Natural killer cell (primary cell): ENCODE measurements at regions of chr4 and their contacts with region 1.

Region 1: DNA sequence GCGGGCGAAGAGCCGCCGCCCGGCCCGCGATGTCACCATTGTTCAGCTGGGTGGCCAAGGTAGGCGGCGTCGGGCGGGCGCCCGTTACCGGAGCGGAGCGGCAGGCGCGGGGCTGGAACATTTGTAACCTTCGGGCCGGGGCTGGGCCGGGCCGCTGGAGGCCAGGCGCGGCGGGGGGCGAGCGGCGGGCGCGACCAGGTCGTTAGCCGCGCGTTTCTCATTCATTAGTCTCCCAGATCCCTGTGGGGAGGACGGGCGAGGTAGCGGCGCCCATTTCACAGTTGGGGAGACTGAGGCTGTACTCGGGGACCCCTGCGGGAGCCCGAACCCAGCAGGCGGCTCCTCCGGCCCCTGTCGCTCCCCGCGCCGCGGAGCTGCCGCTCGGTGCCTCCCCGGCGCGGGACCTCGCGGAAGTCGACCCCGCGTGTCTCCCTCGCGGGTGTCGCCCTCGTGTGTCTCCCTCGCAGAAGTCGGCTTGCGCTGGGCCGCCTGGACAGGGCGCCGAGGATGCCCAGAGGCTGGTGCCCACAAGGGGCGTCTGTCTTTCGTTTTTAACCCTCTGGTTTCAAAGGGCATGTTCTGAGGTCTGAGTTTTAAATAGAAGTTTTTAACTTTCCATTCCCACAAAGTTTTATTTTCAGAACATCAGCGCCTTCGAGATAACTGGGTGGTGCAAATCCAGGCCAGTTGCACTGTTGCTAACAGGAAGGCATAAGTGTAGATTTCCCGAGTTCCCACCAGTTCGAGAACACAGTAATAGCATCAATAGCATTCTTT is 17.5 kb downstream of the PTTG2 start:
- DNase-seq: peak; percentile 75 to 89
- ATAC-seq: peak; percentile 85 to 89 (median 87)
- H3K4me3 ChIP-seq: peak overlapping the region; percentile 23
- H3K4me3 Mint-ChIP-seq: peak overlapping the region; percentile 92
- H3K27ac ChIP-seq: peak overlapping the region; percentile 81
- H3K27ac Mint-ChIP-seq: peak overlapping the region; percentile 79 to 87
- H3K4me1 ChIP-seq: peaks cover 23% of the 10 kb centered on the region
- H3K4me1 Mint-ChIP-seq: peaks cover 22 to 39% of the 10 kb centered on the region in 2 donors
- H3K27me3 ChIP-seq: no peaks in the 10 kb centered on the region
- H3K27me3 Mint-ChIP-seq: no peaks in the 10 kb centered on the region
- CTCF ChIP-seq: peak; percentile 75

Region 2: DNA sequence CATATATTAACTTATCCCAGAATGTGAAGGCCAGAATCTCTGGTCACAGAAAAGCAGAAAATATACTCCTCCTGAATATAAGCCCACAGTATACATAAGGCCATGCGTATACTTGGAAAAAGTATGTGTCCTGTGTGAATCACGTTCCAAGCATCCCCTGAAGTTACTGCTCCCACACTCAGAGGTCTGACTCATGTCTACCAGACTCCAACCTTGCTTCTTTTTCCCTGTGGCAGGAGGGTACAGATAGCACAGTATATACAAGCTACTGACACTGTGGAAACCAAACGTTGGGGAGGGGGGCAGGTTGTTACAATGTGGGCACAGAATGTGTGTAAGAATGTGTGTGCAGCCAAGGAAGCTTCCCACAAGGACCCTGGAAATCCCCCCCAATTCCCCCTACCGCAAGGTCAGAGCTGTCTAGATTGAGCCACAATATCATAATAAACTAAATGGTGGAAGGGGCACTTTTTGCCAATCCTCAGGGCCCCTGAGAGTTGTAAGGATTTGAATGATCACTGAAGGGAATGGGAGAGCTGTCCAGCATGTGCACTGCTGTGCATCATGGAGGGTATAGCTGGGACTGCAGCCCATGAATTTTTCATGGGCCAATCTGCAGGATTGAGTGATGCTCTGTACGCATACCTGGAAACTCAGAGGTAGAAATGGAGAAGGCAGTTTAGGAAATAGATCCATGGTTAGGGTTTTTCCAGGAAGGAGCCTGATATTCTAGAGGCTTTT is 284.0 kb before region 1 on chr4:
- intact Hi-C with region 1: loop called (anchors 10 kb)
- DNase-seq: no peak
- ATAC-seq: no peak
- H3K4me3 ChIP-seq: no peak overlapping the region
- H3K4me3 Mint-ChIP-seq: no peak overlapping the region
- H3K27ac ChIP-seq: no peak overlapping the region
- H3K27ac Mint-ChIP-seq: no peak overlapping the region
- H3K4me1 ChIP-seq: no peaks in the 10 kb centered on the region
- H3K4me1 Mint-ChIP-seq: no peaks in the 10 kb centered on the region
- H3K27me3 ChIP-seq: no peaks in the 10 kb centered on the region
- H3K27me3 Mint-ChIP-seq: no peaks in the 10 kb centered on the region
- CTCF ChIP-seq: no peak

Region 3: DNA sequence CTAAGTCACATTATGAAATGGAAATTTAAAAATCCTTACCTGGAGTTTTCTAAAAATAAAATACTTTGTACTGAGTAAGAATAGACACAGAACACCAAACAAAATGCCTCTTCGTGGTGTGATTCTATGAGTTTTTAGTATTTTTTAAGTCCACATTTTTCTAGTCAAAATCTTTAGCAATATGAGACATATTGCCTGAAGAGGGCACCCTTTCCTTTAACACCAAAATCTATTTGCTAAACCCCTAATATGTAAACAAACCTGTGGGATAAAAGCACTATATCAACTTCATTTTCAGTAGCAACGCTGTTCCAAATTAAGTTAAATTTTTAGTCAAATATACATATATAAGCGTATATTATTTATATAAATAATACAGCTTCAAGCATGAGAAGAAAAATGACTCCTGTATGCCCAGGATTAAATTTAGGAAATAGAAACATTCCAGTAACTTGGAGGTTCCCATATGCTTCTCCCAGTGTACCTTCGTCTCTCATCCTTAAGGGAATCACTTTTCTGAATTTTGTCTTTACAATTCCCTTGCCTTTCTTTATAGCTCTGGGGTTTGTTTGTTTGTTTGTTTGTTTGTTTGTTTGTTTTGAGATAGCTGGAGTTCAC is 174.2 kb before region 1 on chr4:
- intact Hi-C with region 1: loop called (anchors 1 kb)
- DNase-seq: peak in 1 of 2 donors; percentile 79
- ATAC-seq: peak in 2 of 3 donors; percentile 62
- H3K4me3 ChIP-seq: no peak overlapping the region
- H3K4me3 Mint-ChIP-seq: no peak overlapping the region
- H3K27ac ChIP-seq: no peak overlapping the region
- H3K27ac Mint-ChIP-seq: no peak overlapping the region
- H3K4me1 ChIP-seq: no peaks in the 10 kb centered on the region
- H3K4me1 Mint-ChIP-seq: no peaks in the 10 kb centered on the region
- H3K27me3 ChIP-seq: no peaks in the 10 kb centered on the region
- H3K27me3 Mint-ChIP-seq: peaks cover 0 to 7% of the 10 kb centered on the region in 2 donors
- CTCF ChIP-seq: peak; percentile 78

Region 4: GRCh38 chr4:37891260-37892159 is 86.1 kb before region 1 on chr4:
- intact Hi-C with region 1: loop called (anchors 1 kb)
- DNase-seq: peak; percentile 59 to 76
- ATAC-seq: peak; percentile 52 to 62 (median 60)
- H3K4me3 ChIP-seq: peak overlapping the region; percentile 65
- H3K4me3 Mint-ChIP-seq: peak overlapping the region; percentile 94
- H3K27ac ChIP-seq: peak overlapping the region; percentile 76
- H3K27ac Mint-ChIP-seq: peak overlapping the region; percentile 90 to 91
- H3K4me1 ChIP-seq: peaks cover 22% of the 10 kb centered on the region
- H3K4me1 Mint-ChIP-seq: peaks cover 23 to 34% of the 10 kb centered on the region in 2 donors
- H3K27me3 ChIP-seq: no peaks in the 10 kb centered on the region
- H3K27me3 Mint-ChIP-seq: no peaks in the 10 kb centered on the region
- CTCF ChIP-seq: no peak

Region 5: DNA sequence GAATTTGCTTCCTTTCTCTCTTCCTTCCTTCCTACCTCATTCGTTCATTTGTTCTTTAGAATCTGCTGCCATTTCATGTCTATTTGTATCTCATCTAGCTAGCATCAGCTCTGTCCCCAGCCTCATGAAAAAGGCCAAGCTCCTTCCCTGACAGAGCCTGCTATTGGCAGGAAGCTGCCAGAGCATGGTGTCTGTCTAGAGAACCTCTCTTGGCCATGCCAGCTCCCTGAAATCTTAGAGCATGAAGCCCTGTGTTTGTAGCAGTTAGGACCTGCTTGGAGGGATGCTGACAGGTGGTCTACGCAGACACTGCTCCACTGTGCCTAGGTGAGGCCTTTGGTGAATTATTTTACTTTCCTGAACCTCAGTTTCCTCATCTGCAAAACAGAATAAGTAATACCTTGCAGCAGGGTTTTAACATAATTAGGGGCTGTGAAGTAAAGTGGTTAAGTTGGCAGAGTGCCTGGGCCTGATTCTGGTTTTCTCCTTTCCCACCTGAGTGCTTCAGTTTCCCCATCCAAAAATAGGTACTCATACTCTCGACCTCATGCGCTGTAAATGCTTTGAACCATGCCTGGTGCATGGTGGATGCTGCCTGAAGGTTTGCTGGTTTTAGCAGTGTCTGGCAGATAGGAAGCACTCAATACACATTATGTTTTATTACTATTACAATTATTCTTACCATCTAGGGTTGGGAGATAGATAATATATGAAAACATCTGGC is 12.8 kb before region 1 on chr4:
- intact Hi-C with region 1: no loop called
- DNase-seq: no peak
- ATAC-seq: no peak
- H3K4me3 ChIP-seq: no peak overlapping the region
- H3K4me3 Mint-ChIP-seq: no peak overlapping the region
- H3K27ac ChIP-seq: no peak overlapping the region
- H3K27ac Mint-ChIP-seq: no peak overlapping the region
- H3K4me1 ChIP-seq: peaks cover 9% of the 10 kb centered on the region
- H3K4me1 Mint-ChIP-seq: peaks cover 10 to 12% of the 10 kb centered on the region in 2 donors
- H3K27me3 ChIP-seq: no peaks in the 10 kb centered on the region
- H3K27me3 Mint-ChIP-seq: no peaks in the 10 kb centered on the region
- CTCF ChIP-seq: no peak

Region 6: DNA sequence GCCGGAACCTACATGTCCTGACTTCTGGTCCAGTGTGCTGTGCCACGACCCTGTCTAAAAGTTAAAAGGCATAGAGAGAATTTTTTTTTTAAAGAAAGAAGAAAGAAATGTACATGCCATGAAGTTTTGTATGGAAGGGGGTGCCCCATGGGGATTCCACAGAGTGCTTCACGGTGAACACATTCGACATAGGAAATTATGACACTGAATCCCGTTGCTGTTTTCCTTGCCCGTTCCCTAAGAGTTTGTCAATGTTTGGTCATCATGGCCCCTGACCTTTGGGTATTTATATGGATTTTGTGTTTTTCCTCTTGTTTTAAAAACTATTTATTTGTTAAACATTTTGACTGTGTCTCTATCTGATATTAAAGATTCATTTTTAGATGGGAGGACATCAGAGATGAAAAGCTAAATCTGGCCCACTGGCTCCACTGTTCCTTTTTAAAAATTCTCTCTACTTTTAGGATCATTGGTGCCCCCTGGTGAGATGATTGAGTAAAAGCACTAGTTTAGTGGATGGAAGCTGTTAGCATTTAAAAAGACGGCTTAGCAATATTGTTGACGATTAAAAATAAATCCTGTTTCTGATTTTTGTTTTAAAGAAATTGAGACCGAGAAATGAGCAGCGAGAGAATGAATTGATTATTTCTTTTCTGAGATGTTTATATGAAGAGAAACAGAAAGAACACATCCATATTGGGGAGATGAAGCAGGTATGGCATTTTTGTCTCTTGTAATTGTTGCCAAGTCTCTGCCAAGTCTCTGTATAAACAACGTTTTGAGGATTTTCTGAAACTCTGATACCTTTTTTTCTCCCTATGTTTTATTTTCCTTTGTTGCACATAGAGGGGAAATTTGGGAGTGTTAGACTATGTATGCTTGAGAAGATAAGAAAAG is 57.6 kb after region 1 on chr4:
- intact Hi-C with region 1: loop called (anchors 2 kb)
- DNase-seq: peak in 1 of 2 donors; percentile 79
- ATAC-seq: peak; percentile 57 to 80 (median 69)
- H3K4me3 ChIP-seq: no peak overlapping the region
- H3K4me3 Mint-ChIP-seq: no peak overlapping the region
- H3K27ac ChIP-seq: no peak overlapping the region
- H3K27ac Mint-ChIP-seq: no peak overlapping the region
- H3K4me1 ChIP-seq: no peaks in the 10 kb centered on the region
- H3K4me1 Mint-ChIP-seq: peaks cover 0 to 6% of the 10 kb centered on the region in 2 donors
- H3K27me3 ChIP-seq: no peaks in the 10 kb centered on the region
- H3K27me3 Mint-ChIP-seq: no peaks in the 10 kb centered on the region
- CTCF ChIP-seq: peak; percentile 88